Activated T-helper 1 cell treated with anti-CD3 and anti-CD28 coated beads, Interleukin-12 subunit alpha, Interleukin-12 subunit beta, Interleukin-2, Interleukin-4 antibody, amounts not matched to agents 30 ng/mL and 10 ng/mL and 1 ng/mL, durations not matched to agents 14 hours and 24 hours and 36 hours (primary cell): ENCODE measurements at regions of chr6 and their contacts with region 1.

Region 1: GRCh38 chr6:33711140-33712129 is at the start of gene UQCC2:
- DNase-seq: peak; percentile 96
- H3K4me3 Mint-ChIP-seq: peak within 1 kb of the TSS; percentile 95
- H3K27ac Mint-ChIP-seq: peak within 1 kb of the TSS; percentile 99
- H3K4me1 Mint-ChIP-seq: peaks cover 42% of the 10 kb centered on the region
- H3K27me3 Mint-ChIP-seq: peaks cover 3% of the 10 kb centered on the region
- total RNA-seq, gene UQCC2: 123 and 139 TPM in 2 replicates

Region 2: DNA sequence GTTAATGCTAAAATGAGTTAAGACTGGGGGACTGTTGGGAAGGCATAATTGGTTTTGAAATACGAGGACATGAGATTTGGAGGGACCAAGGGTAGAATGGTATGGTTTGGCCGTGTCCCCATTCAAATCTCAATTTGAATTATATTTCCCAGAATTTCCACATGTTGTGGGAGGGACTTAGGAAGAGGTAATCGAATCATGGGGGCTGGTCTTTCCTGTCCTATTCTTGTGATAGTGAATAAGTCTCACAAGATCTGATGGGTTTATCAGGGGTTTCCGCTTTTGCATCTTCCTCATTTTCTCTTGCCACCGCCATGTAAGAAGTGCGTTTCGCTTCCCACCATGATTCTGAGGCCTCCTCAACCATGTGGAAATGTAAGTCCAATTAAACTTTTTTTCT is 244.3 kb before region 1 on chr6:
- intact Hi-C with region 1: no loop called
- DNase-seq: no peak
- H3K4me3 Mint-ChIP-seq: no peak overlapping the region
- H3K27ac Mint-ChIP-seq: no peak overlapping the region
- H3K4me1 Mint-ChIP-seq: no peaks in the 10 kb centered on the region
- H3K27me3 Mint-ChIP-seq: peaks cover 8% of the 10 kb centered on the region

Region 3: GRCh38 chr6:33620856-33621710 is 90.4 kb before region 1 on chr6 and contains the start of gene ITPR3:
- intact Hi-C with region 1: loop called (anchors 1 kb)
- DNase-seq: peak; percentile 68
- H3K4me3 Mint-ChIP-seq: peak within 1 kb of the TSS; percentile 96
- H3K27ac Mint-ChIP-seq: peak within 1 kb of the TSS; percentile 90
- H3K4me1 Mint-ChIP-seq: peaks cover 49% of the 10 kb centered on the region
- H3K27me3 Mint-ChIP-seq: no peaks in the 10 kb centered on the region
- total RNA-seq, gene ITPR3: 42.7 and 42.9 TPM in 2 replicates

Region 4: DNA sequence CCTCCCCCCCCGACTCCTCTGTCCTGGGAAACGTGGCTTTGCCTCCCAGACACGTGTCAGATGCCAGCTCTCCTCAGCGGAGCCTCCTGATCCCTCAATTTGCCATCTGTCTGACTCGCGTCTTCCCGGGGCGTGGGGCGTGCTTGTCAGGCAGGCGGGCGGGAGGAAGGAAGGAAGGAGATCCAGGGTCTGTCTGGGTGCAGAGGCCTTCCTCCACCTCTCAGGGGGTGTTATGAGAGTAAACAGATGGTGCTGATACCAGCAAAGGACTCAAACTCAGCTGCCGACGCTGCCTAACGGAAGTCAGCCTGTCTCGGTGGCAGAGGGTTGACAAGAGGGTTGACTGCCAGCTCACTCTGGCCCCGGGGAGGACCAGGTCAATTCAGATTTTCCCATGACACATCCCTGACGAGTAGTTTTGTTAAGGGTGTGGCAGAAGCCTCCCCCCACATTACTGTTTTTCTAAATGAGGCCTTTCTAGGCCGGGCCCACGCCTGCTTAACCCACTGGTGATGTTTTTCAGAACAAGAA is 17.0 kb before region 1 on chr6:
- intact Hi-C with region 1: loop called (anchors 2 kb)
- DNase-seq: peak; percentile 22
- H3K4me3 Mint-ChIP-seq: peak overlapping the region; percentile 55
- H3K27ac Mint-ChIP-seq: peak overlapping the region; percentile 91
- H3K4me1 Mint-ChIP-seq: peaks cover 63% of the 10 kb centered on the region
- H3K27me3 Mint-ChIP-seq: no peaks in the 10 kb centered on the region

Region 5: GRCh38 chr6:33700391-33701050 is 10.9 kb before region 1 on chr6:
- intact Hi-C with region 1: loop called (anchors 1 kb)
- DNase-seq: peak; percentile 69
- H3K4me3 Mint-ChIP-seq: no peak overlapping the region
- H3K27ac Mint-ChIP-seq: peak overlapping the region; percentile 1
- H3K4me1 Mint-ChIP-seq: peaks cover 31% of the 10 kb centered on the region
- H3K27me3 Mint-ChIP-seq: no peaks in the 10 kb centered on the region

Region 6: GRCh38 chr6:33744001-33744848 is 32.8 kb after region 1 on chr6:
- intact Hi-C with region 1: loop called (anchors 1 kb)
- DNase-seq: peak; percentile 57
- H3K4me3 Mint-ChIP-seq: no peak overlapping the region
- H3K27ac Mint-ChIP-seq: no peak overlapping the region
- H3K4me1 Mint-ChIP-seq: no peaks in the 10 kb centered on the region
- H3K27me3 Mint-ChIP-seq: peaks cover 22% of the 10 kb centered on the region

Region 7: GRCh38 chr6:33761922-33762629 is 50.6 kb after region 1 on chr6:
- intact Hi-C with region 1: loop called (anchors 1 kb)
- DNase-seq: peak; percentile 31
- H3K4me3 Mint-ChIP-seq: no peak overlapping the region
- H3K27ac Mint-ChIP-seq: no peak overlapping the region
- H3K4me1 Mint-ChIP-seq: no peaks in the 10 kb centered on the region
- H3K27me3 Mint-ChIP-seq: peaks cover 2% of the 10 kb centered on the region

Region 8: DNA sequence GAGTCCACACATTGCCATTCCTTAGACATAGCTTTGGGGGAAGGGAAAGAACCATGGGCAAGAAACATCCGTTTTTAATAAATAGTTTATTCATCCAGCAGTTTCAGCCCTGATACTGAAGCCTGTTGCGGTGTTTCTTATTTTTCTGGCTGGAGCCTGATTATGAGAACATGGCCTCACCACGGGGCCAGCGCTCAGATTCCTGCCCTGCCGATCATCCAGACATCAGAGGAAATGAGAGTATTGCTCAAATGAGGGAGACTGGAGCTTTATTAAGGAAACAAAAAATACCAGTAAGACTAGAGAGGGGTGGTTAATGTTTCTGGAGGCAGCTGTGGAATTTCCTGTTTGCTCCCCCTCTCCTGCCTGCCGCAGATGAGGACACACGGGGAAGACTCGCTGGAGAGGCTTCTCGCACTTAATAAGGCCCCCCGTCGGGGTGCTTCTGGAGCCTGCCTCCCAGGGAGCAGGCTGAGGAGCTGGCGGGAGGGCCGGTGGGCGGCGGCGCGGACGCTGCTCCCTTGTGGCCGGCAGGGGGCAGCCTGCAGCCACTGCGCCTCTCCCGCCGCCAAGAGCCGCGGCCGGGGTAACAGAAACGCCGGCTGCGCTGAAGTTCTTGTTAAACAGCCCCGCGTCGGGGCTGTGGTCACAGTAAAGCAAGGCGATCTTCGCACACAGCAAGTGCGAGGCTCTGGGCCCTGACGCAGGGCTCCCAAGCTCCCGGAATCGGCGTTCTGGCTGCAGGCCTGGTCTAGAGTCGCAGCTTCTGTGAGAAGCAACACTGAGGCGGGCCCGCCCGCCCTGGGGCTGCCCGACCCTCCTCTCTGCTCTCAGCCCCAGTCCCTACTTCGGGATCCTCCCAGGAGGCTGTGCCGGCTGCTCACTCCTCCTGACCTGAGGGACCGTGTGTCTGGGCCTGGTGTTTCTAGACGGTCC is 60.0 kb after region 1 on chr6:
- intact Hi-C with region 1: loop called (anchors 2 kb)
- DNase-seq: peak; percentile 38
- H3K4me3 Mint-ChIP-seq: no peak overlapping the region
- H3K27ac Mint-ChIP-seq: peak overlapping the region; percentile 13
- H3K4me1 Mint-ChIP-seq: no peaks in the 10 kb centered on the region
- H3K27me3 Mint-ChIP-seq: peaks cover 7% of the 10 kb centered on the region